BJ (cell line): ENCODE measurements at regions of chr20 and their contacts with region 1.

Region 1: DNA sequence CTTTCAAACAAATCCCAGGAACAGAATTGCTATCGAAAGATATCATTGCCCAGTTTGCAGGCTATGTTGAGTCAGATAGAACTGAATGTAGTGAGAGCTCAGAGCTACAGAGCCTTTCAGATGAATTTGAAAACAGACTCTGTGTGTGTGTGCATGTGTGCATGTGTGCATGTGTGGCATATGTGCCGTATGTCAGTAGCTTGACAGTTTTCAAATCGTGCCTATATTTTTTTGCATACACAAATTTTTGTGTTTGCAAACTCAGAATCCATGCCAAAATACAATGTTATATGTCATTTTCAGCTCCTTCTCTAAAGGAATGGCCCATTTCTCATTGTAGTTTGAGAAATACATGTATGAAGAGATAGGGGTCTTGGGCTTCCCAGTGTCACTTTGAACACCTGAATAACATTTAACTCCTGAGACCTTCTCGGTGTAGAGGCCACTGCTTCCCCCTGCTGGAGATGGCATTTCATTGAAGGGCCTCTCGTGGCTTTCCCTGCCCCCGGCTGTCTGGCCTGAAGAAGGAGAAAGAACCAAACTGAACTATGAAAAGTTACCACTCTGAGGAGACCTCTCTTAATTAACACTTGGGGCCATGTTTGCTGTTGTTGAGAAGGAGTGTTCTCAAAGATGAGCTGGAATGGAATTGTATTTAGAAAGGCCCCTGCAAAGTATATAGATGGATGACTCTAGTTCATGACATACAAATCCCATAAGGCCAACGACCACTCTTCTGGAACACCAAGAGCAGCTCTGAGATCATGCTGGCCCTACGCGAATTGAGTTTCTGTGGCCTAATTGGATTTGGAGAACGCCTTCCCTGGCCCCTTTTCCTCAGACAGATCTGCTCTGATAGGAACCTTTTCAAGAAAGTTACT is 58.7 kb downstream of the VAPB start:
- DNase-seq: no peak
- H3K4me3 ChIP-seq: no peak overlapping the region
- H3K27me3 ChIP-seq: no peaks in the 10 kb centered on the region
- CTCF ChIP-seq: peak; percentile 73

Region 2: GRCh38 chr20:58087193-58087858 is 360.4 kb before region 1 on chr20:
- CTCF ChIA-PET with region 1: no interaction called
- POLR2A ChIA-PET with region 1: no interaction called
- DNase-seq: no peak
- H3K4me3 ChIP-seq: no peak overlapping the region
- H3K27me3 ChIP-seq: peaks cover 4% of the 10 kb centered on the region
- CTCF ChIP-seq: peak; percentile 96

Region 3: DNA sequence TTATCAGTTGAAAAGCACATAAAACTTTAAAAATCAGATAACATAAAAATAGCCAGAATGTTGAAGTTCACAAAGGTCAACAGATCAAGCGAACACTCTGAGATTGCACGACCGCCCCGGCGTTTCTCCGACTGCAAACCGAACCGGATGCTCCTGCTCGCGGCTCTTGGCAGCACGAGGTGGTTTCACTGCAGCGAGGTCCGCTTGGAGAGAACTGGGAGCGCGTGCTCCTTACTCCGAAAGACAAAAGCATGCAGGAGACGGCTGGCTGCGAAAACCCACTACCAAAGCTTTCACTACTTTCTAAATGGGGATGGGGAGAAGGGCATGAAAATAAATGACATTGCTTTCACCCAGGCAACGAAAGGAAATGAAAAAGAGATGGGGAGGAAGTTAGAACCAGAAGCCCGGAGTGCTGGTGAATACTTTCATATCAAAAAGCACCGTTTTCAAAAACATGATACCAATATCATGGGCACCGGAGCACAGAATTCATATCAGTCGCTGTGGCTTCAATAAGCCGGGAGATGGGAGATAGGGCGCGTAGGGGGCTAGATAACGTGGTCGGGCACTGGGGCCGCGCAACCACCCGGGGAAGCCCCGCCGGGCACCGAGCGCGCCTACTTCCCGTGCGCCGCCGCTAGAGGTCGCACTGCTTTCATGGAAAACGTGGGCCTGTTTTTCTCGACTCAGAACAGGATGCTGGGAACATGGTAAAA is 211.0 kb before region 1 on chr20:
- CTCF ChIA-PET with region 1: interaction called, 10 read pairs
- POLR2A ChIA-PET with region 1: no interaction called
- DNase-seq: no peak
- H3K4me3 ChIP-seq: peak overlapping the region; percentile 45
- H3K27me3 ChIP-seq: no peaks in the 10 kb centered on the region
- CTCF ChIP-seq: peak; percentile 97

Region 4: DNA sequence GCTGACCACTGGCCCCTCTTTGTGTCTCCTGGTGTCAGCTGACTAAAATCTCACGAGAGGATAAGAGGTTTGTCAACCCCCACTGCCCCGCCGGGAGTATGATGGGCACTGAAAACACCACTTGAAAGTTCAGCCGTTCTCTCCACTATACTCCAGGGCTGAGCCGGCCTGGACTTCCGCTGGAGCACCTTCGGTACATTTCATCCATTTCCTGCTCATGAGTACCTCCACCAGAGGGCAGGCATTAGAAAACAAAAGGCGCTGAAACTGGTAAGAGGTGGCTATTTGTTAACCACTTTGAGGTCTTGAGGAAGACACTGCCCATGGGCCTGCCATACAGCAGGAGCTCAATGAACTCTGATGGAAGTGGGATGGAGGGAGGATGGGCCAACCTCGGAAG is 201.4 kb before region 1 on chr20:
- CTCF ChIA-PET with region 1: interaction called, 10 read pairs
- POLR2A ChIA-PET with region 1: no interaction called
- DNase-seq: no peak
- H3K4me3 ChIP-seq: no peak overlapping the region
- H3K27me3 ChIP-seq: no peaks in the 10 kb centered on the region
- CTCF ChIP-seq: peak; percentile 40